Body of pancreas (tissue), 4 donors: ENCODE measurements at regions of chr7 and their contacts with region 1.

Region 1: GRCh38 chr7:139620676-139621344 is 97.3 kb downstream of the CLEC2L start:
- DNase-seq: peak; percentile 40 to 60 (median 46)
- ATAC-seq: peak; percentile 62
- H3K4me3 ChIP-seq: no peak overlapping the region
- H3K27ac ChIP-seq: no peak overlapping the region
- H3K4me1 ChIP-seq: no peaks in the 10 kb centered on the region
- H3K27me3 ChIP-seq: no peaks in the 10 kb centered on the region
- CTCF ChIP-seq: peak; percentile 29 to 63 (median 56)
- POLR2A ChIP-seq: no peak

Region 2: DNA sequence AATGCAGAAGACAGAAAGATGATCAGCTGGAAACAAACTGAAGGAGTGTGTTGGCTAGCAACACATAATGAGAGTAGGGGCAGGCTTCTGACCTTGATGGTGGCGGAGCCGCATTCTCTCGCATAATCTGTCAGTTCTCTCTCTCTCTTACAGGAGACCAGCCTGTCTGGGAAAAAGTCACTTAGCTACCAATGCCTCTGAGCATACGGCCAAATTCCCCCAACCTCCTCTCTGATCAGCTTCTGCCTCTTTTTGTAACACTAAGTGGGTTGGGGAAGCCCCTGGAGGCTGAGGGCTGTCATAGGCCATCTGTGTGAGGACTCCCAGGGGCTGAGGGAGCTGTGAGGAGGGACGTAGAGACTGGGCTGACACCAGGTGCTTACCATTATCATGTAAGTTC is 52.4 kb after region 1 on chr7:
- intact Hi-C with region 1: no loop called
- DNase-seq: peak in 3 of 4 donors; percentile 50 to 67 (median 59)
- ATAC-seq: peak; percentile 74
- H3K4me3 ChIP-seq: no peak overlapping the region
- H3K27ac ChIP-seq: peak overlapping the region; percentile 11 to 85 (median 78)
- H3K4me1 ChIP-seq: peaks cover 64% of the 10 kb centered on the region
- H3K27me3 ChIP-seq: no peaks in the 10 kb centered on the region
- CTCF ChIP-seq: no peak
- POLR2A ChIP-seq: peak in 1 of 3 donors; percentile 10

Region 3: DNA sequence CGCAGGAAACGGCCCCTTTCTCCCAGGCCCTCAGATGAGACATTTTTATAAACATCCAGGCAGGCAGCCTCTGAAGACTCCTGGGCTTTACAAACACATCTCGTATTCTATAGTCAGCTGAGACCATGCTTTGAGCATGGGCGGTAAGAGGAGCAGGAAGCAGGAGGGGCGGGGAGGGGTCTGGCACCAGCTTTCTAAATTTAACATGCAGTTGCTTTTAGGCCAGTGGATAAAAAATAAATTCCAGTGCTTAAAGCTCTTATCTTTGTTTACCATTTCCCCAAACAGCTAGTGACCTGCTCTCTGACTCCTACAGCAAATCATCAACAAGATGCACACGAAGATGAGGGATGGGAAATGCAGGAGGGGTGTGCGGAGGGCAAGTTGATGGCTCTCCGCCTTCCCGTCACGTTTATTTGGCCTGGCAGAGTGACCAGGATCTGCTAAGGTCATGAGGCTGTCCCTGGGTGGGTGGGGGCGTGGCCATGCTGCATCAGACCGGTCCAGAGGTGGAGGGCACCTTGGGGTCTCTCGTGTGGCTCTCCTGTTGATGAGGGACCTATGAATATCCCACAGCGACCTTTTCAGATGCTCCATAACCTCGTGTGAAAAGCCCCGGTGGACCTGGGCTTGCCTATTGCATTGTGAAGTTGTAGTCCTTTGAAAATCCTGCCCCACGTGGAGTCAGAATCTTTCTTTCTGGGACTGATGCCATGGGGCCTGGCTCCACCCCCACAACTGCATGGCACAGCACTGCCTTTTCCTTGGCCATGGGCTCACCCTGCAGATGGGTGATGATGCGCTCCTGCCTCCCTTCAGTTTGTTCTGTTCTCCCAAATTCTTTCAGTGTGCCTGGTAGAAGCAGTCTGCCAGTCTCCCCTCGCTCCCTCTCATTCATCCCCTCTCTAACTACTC is 374.5 kb after region 1 on chr7:
- intact Hi-C with region 1: loop called (anchors 10 kb)
- DNase-seq: peak; percentile 40 to 66 (median 55)
- ATAC-seq: peak; percentile 60
- H3K4me3 ChIP-seq: no peak overlapping the region
- H3K27ac ChIP-seq: no peak overlapping the region
- H3K4me1 ChIP-seq: no peaks in the 10 kb centered on the region
- H3K27me3 ChIP-seq: no peaks in the 10 kb centered on the region
- CTCF ChIP-seq: no peak
- POLR2A ChIP-seq: no peak